ENCODE measurements at regions of chr16 and their contacts with region 1.

Region 1: GRCh38 chr16:50160495-50161164 is 7.5 kb downstream of the TENT4B start:
- DNase-seq: peak in 1 of 2 donors; percentile 69
- ATAC-seq: peak; percentile 84 to 88 (median 86)
- H3K4me3 ChIP-seq: no peak overlapping the region
- H3K4me3 Mint-ChIP-seq: peak overlapping the region; percentile 75
- H3K27ac ChIP-seq: peak overlapping the region; percentile 81
- H3K27ac Mint-ChIP-seq: peak overlapping the region; percentile 86 to 87
- H3K4me1 ChIP-seq: peaks cover 28% of the 10 kb centered on the region
- H3K4me1 Mint-ChIP-seq: peaks cover 55 to 61% of the 10 kb centered on the region in 2 donors
- H3K27me3 ChIP-seq: no peaks in the 10 kb centered on the region
- H3K27me3 Mint-ChIP-seq: no peaks in the 10 kb centered on the region
- CTCF ChIP-seq: no peak

Region 2: GRCh38 chr16:50146479-50147435 is 13.9 kb before region 1 on chr16:
- intact Hi-C with region 1: no loop called
- DNase-seq: no peak
- ATAC-seq: no peak
- H3K4me3 ChIP-seq: no peak overlapping the region
- H3K4me3 Mint-ChIP-seq: no peak overlapping the region
- H3K27ac ChIP-seq: no peak overlapping the region
- H3K27ac Mint-ChIP-seq: no peak overlapping the region
- H3K4me1 ChIP-seq: peaks cover under 1% of the 10 kb centered on the region
- H3K4me1 Mint-ChIP-seq: no peaks in the 10 kb centered on the region
- H3K27me3 ChIP-seq: no peaks in the 10 kb centered on the region
- H3K27me3 Mint-ChIP-seq: no peaks in the 10 kb centered on the region
- CTCF ChIP-seq: no peak

Region 3: DNA sequence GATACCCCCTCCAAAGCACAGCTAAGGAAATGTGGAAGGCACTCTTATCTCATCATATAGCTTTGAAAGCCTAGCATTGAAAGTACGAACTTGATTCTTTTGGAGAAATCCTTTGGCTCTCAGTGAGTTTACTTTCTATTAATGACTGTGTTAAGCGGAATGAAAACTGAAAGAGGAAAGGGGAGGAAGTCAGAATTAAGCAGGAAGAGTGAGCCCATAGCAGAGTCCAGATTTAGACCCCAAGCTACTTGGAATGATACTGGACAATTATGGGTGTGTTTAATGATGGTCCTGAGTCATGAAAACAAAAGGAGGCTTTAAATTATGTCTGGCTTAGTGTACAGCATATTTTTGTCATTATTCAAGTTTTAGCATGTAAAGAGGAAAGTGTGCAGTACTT is 34.6 kb after region 1 on chr16:
- intact Hi-C with region 1: loop called (anchors 5 kb)
- DNase-seq: no peak
- ATAC-seq: no peak
- H3K4me3 ChIP-seq: no peak overlapping the region
- H3K4me3 Mint-ChIP-seq: peak overlapping the region; percentile 51
- H3K27ac ChIP-seq: no peak overlapping the region
- H3K27ac Mint-ChIP-seq: peak overlapping the region; percentile 57 to 78
- H3K4me1 ChIP-seq: peaks cover 33% of the 10 kb centered on the region
- H3K4me1 Mint-ChIP-seq: peaks cover 65 to 77% of the 10 kb centered on the region in 2 donors
- H3K27me3 ChIP-seq: no peaks in the 10 kb centered on the region
- H3K27me3 Mint-ChIP-seq: no peaks in the 10 kb centered on the region
- CTCF ChIP-seq: no peak